Panc1 (cell line): ENCODE measurements at regions of chr6 and their contacts with region 1.

Region 1: GRCh38 chr6:128172752-128173682 is 272.2 kb upstream of the THEMIS start:
- DNase-seq: no peak
- ATAC-seq: no peak
- H3K4me3 ChIP-seq: no peak overlapping the region
- H3K27ac ChIP-seq: no peak overlapping the region
- H3K4me1 ChIP-seq: no peaks in the 10 kb centered on the region
- H3K27me3 ChIP-seq: no peaks in the 10 kb centered on the region
- CTCF ChIP-seq: no peak

Region 2: DNA sequence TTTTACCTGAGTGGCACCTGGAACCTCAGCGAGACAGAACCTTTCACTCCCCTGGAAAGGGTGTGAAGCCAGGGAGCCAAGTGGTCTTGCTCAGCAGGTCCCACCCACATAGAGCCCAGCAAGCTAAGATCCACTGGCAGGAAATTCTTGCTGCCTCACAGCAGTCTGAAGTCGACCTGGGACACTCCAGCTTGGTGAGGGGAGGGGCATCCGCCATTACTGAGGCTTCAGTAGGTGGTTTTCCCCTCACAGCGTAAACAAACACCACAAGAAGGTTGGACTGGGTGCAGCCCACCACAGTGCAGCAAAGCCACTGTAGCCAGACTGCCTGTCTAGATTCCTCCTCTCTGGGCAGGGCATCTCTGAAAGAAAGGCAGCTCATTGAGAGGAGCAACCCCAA is 1189.2 kb before region 1 on chr6:
- CTCF ChIA-PET with region 1: no interaction called
- POLR2A ChIA-PET with region 1: no interaction called
- in situ Hi-C with region 1: no loop called
- intact Hi-C with region 1: no loop called
- DNase-seq: no peak
- ATAC-seq: no peak
- H3K4me3 ChIP-seq: no peak overlapping the region
- H3K27ac ChIP-seq: no peak overlapping the region
- H3K4me1 ChIP-seq: no peaks in the 10 kb centered on the region
- H3K27me3 ChIP-seq: no peaks in the 10 kb centered on the region
- CTCF ChIP-seq: no peak

Region 3: DNA sequence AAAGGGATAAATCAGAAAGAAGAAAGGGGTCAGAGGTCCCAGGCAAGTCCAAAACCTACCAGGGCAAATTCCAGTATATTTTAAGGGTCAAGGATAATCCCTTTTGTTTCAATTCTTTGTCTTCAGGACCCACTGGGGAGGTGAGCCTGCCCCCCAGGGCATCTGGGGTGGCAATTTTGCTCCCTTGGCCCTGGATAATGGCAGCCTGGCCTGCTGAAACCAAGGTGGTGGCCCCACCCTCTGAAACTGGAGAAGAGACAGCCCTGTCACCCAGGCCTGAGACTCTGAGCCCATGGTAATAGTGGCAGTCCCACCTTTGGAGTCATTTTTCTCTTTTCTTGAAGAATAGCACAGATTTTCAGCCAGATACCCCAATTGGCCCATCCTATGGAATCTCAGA is 477.9 kb before region 1 on chr6:
- CTCF ChIA-PET with region 1: no interaction called
- POLR2A ChIA-PET with region 1: no interaction called
- in situ Hi-C with region 1: no loop called
- intact Hi-C with region 1: no loop called
- DNase-seq: no peak
- ATAC-seq: no peak
- H3K4me3 ChIP-seq: no peak overlapping the region
- H3K27ac ChIP-seq: no peak overlapping the region
- H3K4me1 ChIP-seq: no peaks in the 10 kb centered on the region
- H3K27me3 ChIP-seq: no peaks in the 10 kb centered on the region
- CTCF ChIP-seq: no peak

Region 4: GRCh38 chr6:128266946-128267345 is 93.9 kb after region 1 on chr6:
- CTCF ChIA-PET with region 1: no interaction called
- POLR2A ChIA-PET with region 1: interaction called, 14 read pairs
- in situ Hi-C with region 1: no loop called
- intact Hi-C with region 1: no loop called
- DNase-seq: no peak
- ATAC-seq: no peak
- H3K4me3 ChIP-seq: no peak overlapping the region
- H3K27ac ChIP-seq: no peak overlapping the region
- H3K4me1 ChIP-seq: peaks cover 9% of the 10 kb centered on the region; the same call in 1 of the 2 replicates
- H3K27me3 ChIP-seq: no peaks in the 10 kb centered on the region
- CTCF ChIP-seq: no peak

Region 5: DNA sequence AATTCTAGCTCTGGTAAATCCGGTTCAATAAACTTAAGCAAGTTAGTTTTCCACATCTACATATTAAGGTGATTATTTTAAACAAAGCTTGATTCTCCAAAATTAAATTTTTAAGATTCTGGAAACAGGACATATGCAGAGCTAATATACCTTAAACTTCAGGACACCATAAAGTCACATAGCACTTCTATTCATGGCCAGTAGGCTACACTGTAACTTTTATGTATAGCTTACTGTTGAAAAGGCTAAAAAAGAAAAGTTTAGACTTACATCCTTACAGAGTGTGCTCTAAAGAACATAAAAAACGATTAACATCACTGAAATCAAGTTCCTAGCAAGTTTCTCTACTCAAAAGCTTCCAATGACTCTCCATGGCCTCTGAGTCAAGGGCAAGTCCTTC is 122.7 kb after region 1 on chr6:
- CTCF ChIA-PET with region 1: no interaction called
- POLR2A ChIA-PET with region 1: no interaction called
- in situ Hi-C with region 1: no loop called
- intact Hi-C with region 1: no loop called
- DNase-seq: no peak
- ATAC-seq: no peak
- H3K4me3 ChIP-seq: no peak overlapping the region
- H3K27ac ChIP-seq: no peak overlapping the region
- H3K4me1 ChIP-seq: no peaks in the 10 kb centered on the region
- H3K27me3 ChIP-seq: no peaks in the 10 kb centered on the region
- CTCF ChIP-seq: peak; percentile 6; the same call in 1 of the 2 replicates

Region 6: DNA sequence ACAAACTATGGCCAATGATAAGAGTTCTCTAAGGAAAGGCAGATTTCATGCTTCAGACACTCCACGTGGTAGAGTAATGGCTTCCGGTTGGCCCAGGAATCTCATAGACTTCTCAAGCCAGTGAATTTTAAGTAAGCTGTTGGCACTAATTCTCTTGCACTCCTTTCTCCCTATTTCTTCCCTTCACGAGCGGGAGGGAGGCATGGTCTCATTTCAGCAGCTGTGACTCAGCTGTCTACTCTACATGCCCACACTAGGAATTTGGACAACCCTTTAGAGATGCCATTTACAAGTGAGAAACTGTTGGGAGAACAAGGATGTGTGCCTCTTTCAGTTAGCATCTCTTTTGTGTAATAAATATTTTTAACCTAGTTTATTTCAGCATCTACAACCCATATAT is 239.7 kb after region 1 on chr6:
- CTCF ChIA-PET with region 1: no interaction called
- POLR2A ChIA-PET with region 1: no interaction called
- in situ Hi-C with region 1: no loop called
- intact Hi-C with region 1: no loop called
- DNase-seq: no peak
- ATAC-seq: no peak
- H3K4me3 ChIP-seq: no peak overlapping the region
- H3K27ac ChIP-seq: no peak overlapping the region
- H3K4me1 ChIP-seq: no peaks in the 10 kb centered on the region
- H3K27me3 ChIP-seq: no peaks in the 10 kb centered on the region
- CTCF ChIP-seq: no peak